PC-9 (cell line): ENCODE measurements at regions of chr3 and their contacts with region 1.

Region 1: DNA sequence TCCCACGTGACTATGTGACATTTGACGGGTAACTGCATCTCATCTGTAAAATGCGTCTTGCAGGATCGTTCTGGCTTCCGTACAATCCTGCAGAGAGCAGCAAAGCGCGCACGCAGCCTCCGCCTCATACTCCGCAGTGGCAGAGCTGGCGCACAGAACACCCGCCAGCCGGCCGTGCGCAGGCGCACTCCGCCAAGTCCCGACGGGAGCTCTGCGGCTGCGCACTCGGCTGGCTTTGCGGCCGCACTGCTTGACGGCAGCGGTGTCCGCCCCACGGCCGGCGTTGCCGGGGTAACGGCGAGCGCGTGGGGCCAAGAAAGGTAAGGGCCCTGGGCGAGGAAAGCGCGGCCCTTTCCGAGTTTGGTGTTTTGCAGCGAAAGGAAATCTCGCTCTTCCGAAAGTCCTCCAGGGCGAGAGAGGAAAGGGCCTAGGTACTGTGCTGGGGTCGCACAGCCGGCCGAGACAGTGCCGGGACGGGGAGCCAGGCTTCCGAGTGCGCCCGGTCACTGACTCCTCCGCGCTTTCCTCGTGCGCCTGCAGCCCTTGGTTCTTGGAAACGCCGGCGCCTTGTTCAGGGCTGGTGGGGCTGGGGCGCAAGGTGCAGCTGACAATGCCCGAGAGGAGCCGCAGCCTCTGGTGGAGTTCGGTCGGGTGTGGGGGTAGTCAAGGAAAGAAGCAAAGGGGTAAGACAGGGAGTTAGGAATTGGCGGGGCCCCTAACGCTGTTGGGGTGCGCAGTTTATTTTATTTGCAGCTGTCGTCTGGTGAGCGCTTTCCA is at the start of gene TSEN2:
- DNase-seq: peak; percentile 79 to 96
- H3K4me3 ChIP-seq: peak within 1 kb of the TSS; percentile 78
- H3K27ac ChIP-seq: peak within 1 kb of the TSS; percentile 52
- H3K4me1 ChIP-seq: peaks cover 33% of the 10 kb centered on the region
- H3K27me3 ChIP-seq: no peaks in the 10 kb centered on the region
- CTCF ChIP-seq: no peak
- total RNA-seq, gene TSEN2: 22.1 and 26.8 TPM in 2 replicates

Region 2: DNA sequence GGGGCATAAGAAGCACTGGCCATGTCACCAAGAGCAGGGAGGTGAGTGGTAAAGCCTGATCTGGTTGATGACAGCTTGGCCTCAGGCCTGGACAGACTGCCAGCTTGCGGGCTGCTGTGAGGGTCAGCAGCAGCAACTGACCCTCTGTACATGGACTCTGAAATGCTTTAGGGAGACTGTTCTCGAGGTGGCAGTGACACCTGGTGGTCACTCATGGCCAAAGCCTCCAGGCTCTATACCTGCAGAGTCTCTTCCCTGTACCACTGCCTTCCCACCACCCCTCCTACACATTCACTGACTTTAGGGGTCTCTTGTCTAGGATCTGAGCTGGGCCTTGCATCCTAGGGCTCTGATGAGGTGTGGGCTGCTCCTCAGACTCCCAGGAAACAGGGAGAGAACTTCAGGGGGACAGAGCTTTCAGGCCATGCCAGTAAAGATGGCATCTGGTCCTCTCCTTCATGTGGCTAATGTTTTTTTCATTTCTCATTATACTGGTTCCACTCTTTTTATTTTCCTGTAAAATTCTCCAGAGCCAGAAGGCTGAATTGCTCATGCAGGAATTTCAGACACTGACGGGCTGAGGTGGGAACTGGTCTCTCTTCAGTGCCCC is 308.4 kb before region 1 on chr3:
- CTCF ChIA-PET with region 1: interaction called, 6 read pairs
- POLR2A ChIA-PET with region 1: interaction called, 3 read pairs
- intact Hi-C with region 1: loop called (anchors 1 kb)
- DNase-seq: peak in 1 of 2 experiments; percentile 47
- H3K4me3 ChIP-seq: no peak overlapping the region
- H3K27ac ChIP-seq: no peak overlapping the region
- H3K4me1 ChIP-seq: peaks cover 34% of the 10 kb centered on the region
- H3K27me3 ChIP-seq: no peaks in the 10 kb centered on the region
- CTCF ChIP-seq: peak; percentile 90

Region 3: DNA sequence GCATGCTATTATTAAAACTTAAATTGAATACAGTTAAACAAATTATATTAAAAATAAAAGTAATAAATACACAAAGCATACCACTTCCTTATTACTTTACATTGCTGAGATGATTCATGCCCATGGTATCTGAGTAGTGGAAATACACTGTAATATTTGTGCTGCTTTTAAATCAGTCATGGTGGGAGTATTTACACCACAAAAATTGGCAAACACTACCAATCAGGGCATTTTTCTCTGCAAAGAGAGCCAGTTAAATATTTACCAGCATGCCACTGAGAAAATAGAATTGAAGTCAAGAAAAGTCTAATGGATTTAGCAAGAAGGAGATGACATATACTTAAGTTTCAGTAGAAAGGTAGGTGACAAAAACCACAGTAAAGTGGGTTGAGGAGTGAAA is 175.9 kb before region 1 on chr3:
- CTCF ChIA-PET with region 1: no interaction called
- POLR2A ChIA-PET with region 1: no interaction called
- intact Hi-C with region 1: loop called (anchors 5 kb)
- DNase-seq: peak in 1 of 2 experiments; percentile 82
- H3K4me3 ChIP-seq: no peak overlapping the region; the same call in 1 of the 2 replicates
- H3K27ac ChIP-seq: peak overlapping the region; percentile 63
- H3K4me1 ChIP-seq: peaks cover 54% of the 10 kb centered on the region
- H3K27me3 ChIP-seq: no peaks in the 10 kb centered on the region
- CTCF ChIP-seq: no peak

Region 4: GRCh38 chr3:12405432-12406272 is 78.7 kb before region 1 on chr3:
- CTCF ChIA-PET with region 1: no interaction called
- POLR2A ChIA-PET with region 1: interaction called, 27 read pairs
- intact Hi-C with region 1: no loop called
- DNase-seq: peak; percentile 92 to 97
- H3K4me3 ChIP-seq: peak overlapping the region; percentile 20; the same call in 1 of the 2 replicates
- H3K27ac ChIP-seq: peak overlapping the region; percentile 96
- H3K4me1 ChIP-seq: peaks cover 51% of the 10 kb centered on the region
- H3K27me3 ChIP-seq: no peaks in the 10 kb centered on the region
- CTCF ChIP-seq: no peak

Region 5: GRCh38 chr3:12471243-12471651 is 13.1 kb before region 1 on chr3:
- CTCF ChIA-PET with region 1: no interaction called
- POLR2A ChIA-PET with region 1: no interaction called
- intact Hi-C with region 1: no loop called
- DNase-seq: peak; percentile 76 to 92
- H3K4me3 ChIP-seq: no peak overlapping the region
- H3K27ac ChIP-seq: peak overlapping the region; percentile 92
- H3K4me1 ChIP-seq: peaks cover 66% of the 10 kb centered on the region
- H3K27me3 ChIP-seq: no peaks in the 10 kb centered on the region
- CTCF ChIP-seq: peak; percentile 64

Region 6: DNA sequence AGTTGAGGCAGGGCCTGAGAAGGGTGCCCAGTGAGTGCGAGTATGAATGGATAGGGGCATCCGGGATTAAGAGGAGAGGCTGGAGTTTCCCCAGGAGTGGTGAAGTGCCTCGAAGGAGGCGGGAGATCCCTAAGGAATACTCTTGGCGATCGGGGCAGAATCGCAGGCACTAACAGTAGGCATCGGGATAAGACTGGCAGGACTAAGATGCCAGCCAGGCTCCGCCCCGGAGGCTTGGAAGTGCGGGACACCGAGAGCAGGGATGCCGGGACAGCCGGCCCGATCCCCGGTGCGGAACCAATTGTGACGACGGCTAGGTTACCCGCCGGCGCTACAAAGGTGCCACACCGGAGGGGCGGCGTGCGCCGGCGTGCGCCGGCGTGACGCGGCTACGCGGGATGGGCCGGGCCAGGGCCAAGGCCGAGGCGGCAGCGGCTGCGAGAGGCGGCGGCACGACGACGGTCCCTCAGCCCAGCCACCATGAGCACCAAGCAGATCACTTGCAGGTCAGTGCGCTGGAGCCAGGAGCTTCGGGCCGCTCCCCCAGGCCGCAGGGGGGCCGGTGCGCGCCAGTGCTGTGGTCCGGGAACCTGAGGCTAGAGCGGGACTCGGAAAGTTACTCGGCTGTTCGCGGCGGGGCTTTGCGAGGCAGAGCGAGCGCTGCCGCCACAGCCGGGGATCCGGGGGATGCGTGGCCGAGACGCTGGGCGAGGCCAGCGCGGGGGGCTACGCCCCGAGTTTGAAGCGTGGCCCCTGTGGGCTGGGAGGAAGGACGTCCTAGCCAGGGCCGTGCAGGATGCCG is 72.5 kb after region 1 on chr3 and contains the start of gene MKRN2:
- CTCF ChIA-PET with region 1: no interaction called
- POLR2A ChIA-PET with region 1: no interaction called
- intact Hi-C with region 1: loop called (anchors 5 kb)
- DNase-seq: peak; percentile 70 to 92
- H3K4me3 ChIP-seq: peak within 1 kb of the TSS; percentile 74
- H3K27ac ChIP-seq: peak within 1 kb of the TSS; percentile 80
- H3K4me1 ChIP-seq: peaks cover 21% of the 10 kb centered on the region
- H3K27me3 ChIP-seq: no peaks in the 10 kb centered on the region
- CTCF ChIP-seq: no peak
- total RNA-seq, gene MKRN2: 25.0 and 30.9 TPM in 2 replicates

Region 7: DNA sequence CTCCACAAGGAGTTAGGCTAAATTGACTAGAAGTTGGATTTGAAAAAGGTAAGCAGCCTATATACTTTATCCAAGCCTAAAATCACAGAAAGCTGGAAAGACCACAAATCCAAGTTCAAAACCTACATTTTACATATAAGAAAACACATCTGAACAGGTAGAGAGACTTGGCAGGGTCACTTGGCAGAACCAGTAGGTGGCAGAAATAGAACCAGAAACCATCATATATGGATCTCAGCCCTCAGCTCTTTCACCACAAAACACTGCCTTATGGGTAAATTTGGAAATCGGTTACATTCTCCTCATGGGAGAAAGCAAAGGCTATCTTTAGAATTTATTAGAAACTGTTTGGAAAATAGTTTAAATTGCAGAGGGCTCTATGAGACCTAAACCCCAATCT is 116.7 kb after region 1 on chr3:
- CTCF ChIA-PET with region 1: no interaction called
- POLR2A ChIA-PET with region 1: no interaction called
- intact Hi-C with region 1: no loop called
- DNase-seq: no peak
- H3K4me3 ChIP-seq: no peak overlapping the region
- H3K27ac ChIP-seq: no peak overlapping the region
- H3K4me1 ChIP-seq: no peaks in the 10 kb centered on the region
- H3K27me3 ChIP-seq: no peaks in the 10 kb centered on the region
- CTCF ChIP-seq: no peak

Region 8: DNA sequence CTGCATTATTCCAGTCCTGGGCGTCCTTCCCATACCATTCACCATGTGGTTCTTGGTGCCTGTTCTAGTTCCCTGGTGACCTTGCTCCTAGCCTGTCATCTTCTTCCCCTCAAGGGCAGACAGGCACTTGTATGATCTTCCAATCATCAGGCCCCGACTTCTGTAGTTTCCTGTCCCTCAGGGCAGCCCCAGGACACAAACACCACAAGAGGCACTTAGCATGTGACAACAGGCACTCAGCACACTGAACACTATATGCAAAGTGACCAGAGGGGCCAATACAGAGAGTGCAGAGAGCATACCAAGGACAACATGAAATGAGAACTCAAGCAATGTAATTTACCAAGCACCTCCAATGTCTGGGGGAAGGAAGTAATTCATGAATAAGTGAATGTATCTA is 256.8 kb after region 1 on chr3:
- CTCF ChIA-PET with region 1: no interaction called
- POLR2A ChIA-PET with region 1: no interaction called
- intact Hi-C with region 1: no loop called
- DNase-seq: no peak
- H3K4me3 ChIP-seq: no peak overlapping the region
- H3K27ac ChIP-seq: no peak overlapping the region
- H3K4me1 ChIP-seq: no peaks in the 10 kb centered on the region
- H3K27me3 ChIP-seq: no peaks in the 10 kb centered on the region
- CTCF ChIP-seq: no peak

Region 9: GRCh38 chr3:12891985-12892839 is 407.8 kb after region 1 on chr3:
- CTCF ChIA-PET with region 1: interaction called, 3 read pairs
- POLR2A ChIA-PET with region 1: no interaction called
- intact Hi-C with region 1: loop called (anchors 5 kb)
- DNase-seq: peak in 1 of 2 experiments; percentile 47
- H3K4me3 ChIP-seq: no peak overlapping the region
- H3K27ac ChIP-seq: no peak overlapping the region
- H3K4me1 ChIP-seq: no peaks in the 10 kb centered on the region
- H3K27me3 ChIP-seq: peaks cover 34% of the 10 kb centered on the region; the same call in 1 of the 2 replicates
- CTCF ChIP-seq: peak; percentile 96